ENCODE measurements at regions of chr22 and their contacts with region 1.

Region 1: DNA sequence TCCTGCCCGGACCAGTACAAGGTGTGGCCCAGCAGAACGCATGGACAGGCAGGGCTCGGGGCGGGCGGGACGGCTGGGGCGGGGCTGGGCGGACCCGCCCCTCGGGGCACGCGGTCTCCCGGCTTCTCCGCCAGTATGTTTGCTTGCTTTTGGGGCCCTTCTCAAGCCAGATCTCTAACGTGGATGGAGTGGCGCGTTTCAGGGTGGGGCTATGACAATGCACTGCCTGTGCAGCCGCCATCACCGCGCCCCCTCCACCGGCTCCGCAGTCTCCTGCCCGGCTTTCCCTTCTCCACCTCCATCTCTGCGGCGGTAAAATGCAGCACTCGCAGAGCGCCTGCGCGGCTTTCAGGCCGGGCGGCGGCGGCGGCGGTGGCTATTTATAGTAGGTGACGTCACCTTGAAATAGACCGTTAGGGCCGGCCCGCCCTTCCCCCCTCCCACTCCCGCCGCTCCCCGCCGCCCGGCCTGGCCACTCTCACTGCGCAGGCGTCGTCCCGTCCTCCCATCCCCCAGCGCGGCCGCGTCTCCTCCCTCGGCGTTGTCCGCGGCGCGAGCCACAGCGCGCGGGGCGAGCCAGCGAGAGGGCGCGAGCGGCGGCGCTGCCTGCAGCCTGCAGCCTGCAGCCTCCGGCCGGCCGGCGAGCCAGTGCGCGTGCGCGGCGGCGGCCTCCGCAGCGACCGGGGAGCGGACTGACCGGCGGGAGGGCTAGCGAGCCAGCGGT is at the start of gene YWHAH:
- DNase-seq: peak; percentile 95 to 98 (median 96)
- ATAC-seq: peak; percentile 93
- H3K4me3 ChIP-seq: peak within 1 kb of the TSS; percentile 82
- H3K4me1 ChIP-seq: peaks cover 18% of the 10 kb centered on the region
- CTCF ChIP-seq: no peak
- total RNA-seq, gene YWHAH: 140 to 162 (median 149) TPM

Region 2: DNA sequence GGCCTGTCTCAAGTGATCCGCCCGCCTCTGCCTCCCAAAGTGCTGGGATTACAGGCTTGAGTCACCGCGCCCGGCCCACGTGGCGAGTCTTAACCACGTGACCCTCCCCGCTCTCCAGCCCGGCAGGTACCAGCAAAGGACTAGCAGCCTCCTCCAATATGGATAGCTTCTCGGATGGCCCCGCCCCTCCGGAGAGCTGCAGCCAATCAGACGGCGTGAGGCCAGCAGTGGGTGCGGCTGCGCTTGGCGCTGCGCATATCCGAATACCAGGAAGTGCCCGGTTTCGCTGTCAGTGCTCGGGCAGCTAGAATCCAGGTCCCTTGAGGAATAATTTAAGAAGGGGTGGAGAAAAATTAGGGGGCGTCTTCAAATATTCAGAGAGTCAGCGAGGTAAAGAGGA is 267.4 kb before region 1 on chr22:
- intact Hi-C with region 1: loop called in 1 of 2 experiments (anchors 10 kb)
- DNase-seq: peak; percentile 98
- ATAC-seq: peak; percentile 100
- H3K4me3 ChIP-seq: no peak overlapping the region
- H3K4me1 ChIP-seq: peaks cover 8% of the 10 kb centered on the region
- CTCF ChIP-seq: no peak

Region 3: GRCh38 chr22:31749636-31750364 is 194.3 kb before region 1 on chr22 and contains the start of gene PRR14L:
- intact Hi-C with region 1: loop called in 1 of 2 experiments (anchors 10 kb)
- DNase-seq: peak; percentile 99
- ATAC-seq: peak; percentile 87
- H3K4me3 ChIP-seq: peak within 1 kb of the TSS; percentile 100
- H3K4me1 ChIP-seq: peaks cover 22% of the 10 kb centered on the region
- CTCF ChIP-seq: no peak
- total RNA-seq, gene PRR14L: 61.7 to 64.6 (median 63.5) TPM

Measured in mucosa of descending colon (tissue), 3 donors.